ENCODE measurements at regions of chr16 and their contacts with region 1.

Region 1: DNA sequence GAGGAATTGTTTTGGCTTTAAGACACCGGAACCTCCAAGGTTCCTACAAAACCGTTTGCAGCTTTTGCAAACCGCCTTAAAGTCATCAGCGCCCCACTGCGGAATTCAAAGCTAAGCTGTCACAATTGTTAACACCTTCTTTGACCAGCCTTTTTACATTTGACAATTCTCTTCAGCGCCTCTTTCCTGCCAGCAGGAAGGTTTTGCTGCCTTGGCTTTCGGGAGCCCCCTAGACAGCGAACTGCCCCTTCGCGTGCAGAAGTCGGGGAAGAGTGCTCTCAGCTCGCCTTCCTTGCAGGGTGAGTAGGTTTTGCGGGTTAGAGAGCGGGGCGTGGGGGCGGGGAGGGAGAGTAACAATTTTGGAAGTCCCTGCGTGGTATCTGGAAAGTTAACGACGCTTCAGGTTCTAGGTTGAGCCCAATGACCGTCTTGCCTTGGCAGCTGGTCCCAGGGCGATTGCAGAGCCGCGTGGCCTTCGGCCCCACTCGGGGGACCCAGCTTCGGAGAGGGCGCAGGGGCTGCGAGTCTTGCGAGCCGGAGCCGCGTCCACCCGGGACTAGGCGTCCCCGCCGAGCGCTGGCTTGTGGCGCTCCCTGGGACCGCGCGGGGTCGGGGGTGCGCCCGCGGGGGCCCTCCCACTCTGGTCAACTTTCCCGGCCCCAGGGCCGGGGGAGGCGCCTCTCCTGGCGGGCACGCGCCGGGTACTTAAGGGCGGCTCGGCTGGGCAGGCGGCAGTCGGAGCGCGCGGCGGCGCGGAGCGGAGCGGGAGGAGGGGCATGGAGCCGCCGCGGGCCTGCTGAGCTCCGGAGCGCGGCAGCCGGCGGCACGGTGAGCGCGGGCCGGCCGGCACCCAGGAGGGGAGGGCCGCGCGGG is at the start of gene HAS3:
- DNase-seq: peak; percentile 64 to 81
- H3K4me3 ChIP-seq: peak within 1 kb of the TSS; percentile 60 to 82 (median 75)
- H3K27ac ChIP-seq: no peak within 1 kb of the TSS
- H3K4me1 ChIP-seq: peaks cover 15 to 33% (median 19%) of the 10 kb centered on the region in 4 experiments
- H3K27me3 ChIP-seq: no peaks in the 10 kb centered on the region; a peak in 1 of 7 replicates
- CTCF ChIP-seq: peak in 2 of 3 experiments; percentile 48 to 49; a peak in 3 of 4 replicates
- EP300 ChIP-seq: no peak
- POLR2A ChIP-seq: peak; percentile 16 to 71; a peak in 2 of 3 replicates
- RAD21 ChIP-seq: peak; percentile 65 to 76
- total RNA-seq, gene HAS3: 64.4 and 69.6 TPM in 2 replicates

Region 2: GRCh38 chr16:68972720-68973119 is 133.0 kb before region 1 on chr16:
- CTCF ChIA-PET with region 1: interaction called, 5 read pairs
- POLR2A ChIA-PET with region 1: interaction called, 15 read pairs
- DNase-seq: peak; percentile 63 to 67
- H3K4me3 ChIP-seq: peak overlapping the region in 1 of 4 experiments; percentile 25; a peak in 3 of 8 replicates
- H3K27ac ChIP-seq: no peak overlapping the region
- H3K4me1 ChIP-seq: peaks cover 10 to 20% (median 11%) of the 10 kb centered on the region in 4 experiments
- H3K27me3 ChIP-seq: no peaks in the 10 kb centered on the region
- CTCF ChIP-seq: peak; percentile 48 to 63 (median 60)
- EP300 ChIP-seq: no peak
- POLR2A ChIP-seq: no peak
- RAD21 ChIP-seq: peak; percentile 47 to 49

Region 3: DNA sequence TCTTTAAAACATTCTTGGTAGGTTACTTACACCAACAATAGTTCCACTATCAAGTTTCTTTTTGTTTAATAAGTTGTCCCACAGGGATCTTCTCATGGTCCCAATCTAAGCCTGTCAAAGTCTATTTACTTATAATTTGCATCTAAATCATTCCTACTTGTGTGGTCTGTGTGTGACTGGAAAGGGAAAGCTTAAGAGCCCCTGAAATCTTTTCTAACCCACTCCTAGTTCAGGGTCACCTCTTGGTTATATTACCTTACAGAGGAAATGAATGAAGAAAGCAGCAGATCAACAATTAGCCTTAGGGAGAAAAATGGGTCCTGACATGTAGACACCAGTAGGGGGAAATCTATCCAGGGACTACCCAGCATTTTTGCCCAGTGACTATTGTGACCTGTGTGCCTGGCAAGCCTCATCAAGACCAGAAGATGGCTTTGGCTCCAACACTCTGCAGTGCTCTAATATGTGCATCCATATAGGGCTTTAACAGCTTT is 110.7 kb before region 1 on chr16:
- CTCF ChIA-PET with region 1: interaction called, 30 read pairs
- POLR2A ChIA-PET with region 1: interaction called, 23 read pairs
- DNase-seq: peak in 1 of 2 experiments; percentile 31
- H3K4me3 ChIP-seq: peak overlapping the region in 1 of 4 experiments; percentile 5; a peak in 1 of 8 replicates
- H3K27ac ChIP-seq: no peak overlapping the region
- H3K4me1 ChIP-seq: peaks cover 0 to 15% (median 13%) of the 10 kb centered on the region in 4 experiments; a peak in 6 of 7 replicates
- H3K27me3 ChIP-seq: no peaks in the 10 kb centered on the region
- CTCF ChIP-seq: peak; percentile 13 to 72 (median 63)
- EP300 ChIP-seq: no peak
- POLR2A ChIP-seq: no peak
- RAD21 ChIP-seq: peak; percentile 62 to 74

Region 4: DNA sequence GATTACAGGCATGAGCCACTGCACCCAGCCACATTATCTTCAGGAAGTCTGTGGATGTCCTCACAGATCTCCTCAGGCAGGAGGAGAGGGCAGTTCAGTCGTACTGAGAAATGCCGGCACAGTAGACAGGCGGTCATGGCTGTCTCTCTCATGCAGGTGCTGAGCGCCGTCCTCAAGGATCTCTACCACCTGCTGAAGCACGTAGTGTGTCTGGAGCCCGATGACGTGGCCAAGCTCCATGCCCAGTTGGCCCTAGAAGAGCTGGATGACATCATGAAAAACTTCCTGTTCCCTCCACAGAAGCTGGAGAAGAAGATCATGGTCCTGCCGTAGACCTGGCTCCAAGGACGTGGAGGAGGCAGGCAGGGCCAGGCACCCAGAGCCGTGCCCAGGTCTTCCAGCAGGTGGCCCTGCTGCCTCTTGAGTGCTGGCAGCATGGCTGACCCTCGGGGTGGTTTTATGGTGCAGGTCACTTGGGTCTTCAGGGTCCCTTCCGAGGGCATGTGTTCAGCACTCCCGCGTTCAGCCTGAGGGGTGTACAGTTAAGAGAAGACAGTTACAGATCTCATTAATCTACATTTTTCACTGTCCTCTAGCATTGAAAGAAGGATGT is 22.3 kb before region 1 on chr16:
- CTCF ChIA-PET with region 1: interaction called, 8 read pairs
- POLR2A ChIA-PET with region 1: interaction called, 15 read pairs
- DNase-seq: no peak
- H3K4me3 ChIP-seq: no peak overlapping the region
- H3K27ac ChIP-seq: no peak overlapping the region
- H3K4me1 ChIP-seq: peaks cover 0 to 8% (median 3%) of the 10 kb centered on the region in 4 experiments; a peak in 5 of 7 replicates
- H3K27me3 ChIP-seq: no peaks in the 10 kb centered on the region
- CTCF ChIP-seq: peak; percentile 70 to 77 (median 74)
- EP300 ChIP-seq: no peak
- POLR2A ChIP-seq: no peak
- RAD21 ChIP-seq: peak; percentile 54 to 73

Region 5: GRCh38 chr16:69123910-69124309 is 18.2 kb after region 1 on chr16:
- CTCF ChIA-PET with region 1: interaction called, 174 read pairs
- POLR2A ChIA-PET with region 1: interaction called, 38 read pairs
- DNase-seq: no peak
- H3K4me3 ChIP-seq: no peak overlapping the region
- H3K27ac ChIP-seq: no peak overlapping the region
- H3K4me1 ChIP-seq: no peaks in the 10 kb centered on the region
- H3K27me3 ChIP-seq: no peaks in the 10 kb centered on the region
- CTCF ChIP-seq: peak in 2 of 3 experiments; percentile 68; a peak in 3 of 4 replicates
- EP300 ChIP-seq: no peak
- POLR2A ChIP-seq: no peak
- RAD21 ChIP-seq: peak; percentile 81 to 85

Region 6: GRCh38 chr16:69301861-69302260 is 196.1 kb after region 1 on chr16:
- CTCF ChIA-PET with region 1: no interaction called
- POLR2A ChIA-PET with region 1: no interaction called
- DNase-seq: no peak
- H3K4me3 ChIP-seq: no peak overlapping the region
- H3K27ac ChIP-seq: no peak overlapping the region
- H3K4me1 ChIP-seq: no peaks in the 10 kb centered on the region
- H3K27me3 ChIP-seq: no peaks in the 10 kb centered on the region
- CTCF ChIP-seq: no peak
- EP300 ChIP-seq: no peak
- POLR2A ChIP-seq: no peak
- RAD21 ChIP-seq: no peak

Measured in H1 (cell line).